ENCODE measurements at regions of chr20 and their contacts with region 1.

Region 1: DNA sequence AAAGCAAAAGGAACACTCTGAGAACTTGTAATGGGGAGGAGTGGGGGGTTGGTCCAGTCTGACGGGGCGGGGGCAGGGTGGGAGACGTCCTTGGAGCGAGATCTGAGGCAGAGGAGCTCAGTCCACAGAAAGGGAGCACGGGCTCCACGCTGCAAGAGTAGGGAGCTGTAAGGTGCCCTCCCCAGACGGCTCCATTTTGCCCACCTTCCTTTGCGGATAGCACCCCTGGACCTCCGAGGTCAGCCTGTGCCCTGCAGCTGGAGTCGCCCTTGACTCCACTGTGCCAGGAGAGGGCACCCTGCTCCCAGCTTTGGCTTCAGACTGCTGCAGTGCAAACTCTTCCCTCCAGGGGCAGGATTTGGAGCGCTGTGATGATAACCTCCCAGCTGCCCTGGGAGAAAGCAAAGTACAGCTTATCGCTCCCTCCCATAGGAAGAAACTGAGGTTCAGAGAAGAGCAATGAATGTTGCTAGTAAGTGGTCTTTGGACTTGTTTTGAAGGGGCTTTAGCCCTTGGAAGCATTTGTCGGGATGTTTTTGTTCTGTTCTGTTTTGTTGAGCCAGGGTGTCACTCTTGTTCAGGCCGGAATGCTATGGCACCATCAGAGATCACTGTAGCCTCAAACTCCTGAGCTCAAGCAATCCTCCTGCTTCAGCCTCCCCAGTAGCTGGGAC is 9.5 kb upstream of the AHCY start:
- DNase-seq: peak; percentile 95
- ATAC-seq: peak; percentile 48
- H3K4me3 ChIP-seq: peak overlapping the region; percentile 56
- H3K27ac ChIP-seq: no peak overlapping the region
- H3K4me1 ChIP-seq: peaks cover 52% of the 10 kb centered on the region
- H3K27me3 ChIP-seq: no peaks in the 10 kb centered on the region
- CTCF ChIP-seq: peak; percentile 100

Region 2: DNA sequence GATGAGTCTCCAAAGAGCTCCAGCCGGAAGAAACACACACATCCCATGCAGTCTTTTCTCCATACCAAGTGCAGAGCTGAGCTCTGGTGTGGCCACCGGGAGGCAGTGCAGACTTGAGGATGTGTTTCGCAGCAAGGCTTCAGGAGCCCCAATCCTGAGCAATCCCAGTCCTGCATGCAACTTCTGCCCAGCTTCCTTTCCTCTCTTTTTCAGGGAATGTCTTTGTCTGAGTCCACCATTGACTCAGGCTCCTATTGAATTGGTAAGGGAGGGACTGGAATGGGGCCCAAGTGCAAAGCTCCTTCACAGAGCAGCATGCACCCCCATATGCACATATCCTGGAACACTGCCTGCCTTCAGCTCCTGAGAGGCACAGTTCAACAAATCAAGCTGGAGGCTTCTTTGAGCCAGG is 122.0 kb before region 1 on chr20:
- CTCF ChIA-PET with region 1: interaction called, 11 read pairs
- POLR2A ChIA-PET with region 1: no interaction called
- intact Hi-C with region 1: no loop called
- DNase-seq: peak; percentile 84
- ATAC-seq: peak; percentile 100
- H3K4me3 ChIP-seq: no peak overlapping the region
- H3K27ac ChIP-seq: no peak overlapping the region
- H3K4me1 ChIP-seq: no peaks in the 10 kb centered on the region
- H3K27me3 ChIP-seq: peaks cover 26% of the 10 kb centered on the region
- CTCF ChIP-seq: peak; percentile 91

Region 3: GRCh38 chr20:34363062-34363464 is 50.4 kb after region 1 on chr20 and contains the start of gene ITCH:
- CTCF ChIA-PET with region 1: interaction called, 21 read pairs
- POLR2A ChIA-PET with region 1: interaction called, 22 read pairs
- intact Hi-C with region 1: loop called (anchors 1 kb)
- DNase-seq: peak; percentile 97
- ATAC-seq: peak; percentile 98
- H3K4me3 ChIP-seq: peak within 1 kb of the TSS; percentile 85
- H3K27ac ChIP-seq: peak within 1 kb of the TSS; percentile 68
- H3K4me1 ChIP-seq: peaks cover 32% of the 10 kb centered on the region
- H3K27me3 ChIP-seq: no peaks in the 10 kb centered on the region
- CTCF ChIP-seq: no peak
- total RNA-seq, gene ITCH: 49.4 and 54.8 TPM in 2 replicates

Region 4: DNA sequence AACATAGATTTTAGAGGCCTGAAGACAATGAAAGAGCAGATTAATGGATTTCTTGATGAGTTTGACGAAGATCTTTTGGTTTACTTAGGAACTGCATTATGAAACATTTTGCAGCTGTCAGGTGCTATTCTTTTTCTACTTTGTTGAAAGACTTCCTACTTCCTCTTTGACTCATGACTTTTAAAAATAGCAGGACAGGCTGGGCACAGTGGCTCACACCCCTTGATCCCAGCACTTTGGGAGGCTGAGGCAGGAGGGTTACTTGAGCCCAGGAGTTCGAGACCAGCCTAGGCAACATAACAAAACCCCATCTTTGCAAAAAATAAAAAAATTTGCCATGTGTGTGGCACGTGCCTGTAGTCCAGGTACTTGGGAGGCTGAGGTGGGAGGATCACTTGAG is 102.4 kb after region 1 on chr20:
- CTCF ChIA-PET with region 1: interaction called, 11 read pairs
- POLR2A ChIA-PET with region 1: no interaction called
- intact Hi-C with region 1: loop called (anchors 1 kb)
- DNase-seq: no peak
- ATAC-seq: no peak
- H3K4me3 ChIP-seq: no peak overlapping the region
- H3K27ac ChIP-seq: no peak overlapping the region
- H3K4me1 ChIP-seq: peaks cover 18% of the 10 kb centered on the region
- H3K27me3 ChIP-seq: no peaks in the 10 kb centered on the region
- CTCF ChIP-seq: no peak

Region 5: DNA sequence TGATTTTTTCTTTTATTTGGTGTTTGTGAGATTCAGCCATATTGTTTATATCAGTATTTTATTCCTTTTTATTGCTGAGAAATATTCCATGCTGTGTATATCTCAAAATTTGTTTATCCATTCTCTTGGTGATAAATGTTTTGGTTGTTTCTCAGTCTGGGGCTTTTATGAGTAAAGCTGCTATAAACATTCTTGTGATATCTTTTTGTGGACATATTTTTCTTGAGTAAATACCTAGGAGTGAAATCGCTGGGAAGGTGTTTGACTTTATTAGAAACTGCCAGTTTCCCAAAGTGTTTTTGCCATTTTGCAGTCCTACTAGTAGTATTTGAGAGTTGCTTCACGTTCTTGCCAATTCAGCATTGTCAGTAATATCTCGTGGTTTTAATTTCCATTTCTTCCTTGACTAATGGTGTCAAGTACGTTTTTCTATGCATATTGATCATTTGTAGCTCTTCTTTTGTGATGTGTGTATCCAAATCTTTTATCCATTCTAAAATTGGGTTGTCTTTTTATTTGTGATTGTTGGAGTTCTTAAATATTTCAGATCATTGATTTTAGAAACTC is 172.5 kb after region 1 on chr20:
- CTCF ChIA-PET with region 1: no interaction called
- POLR2A ChIA-PET with region 1: no interaction called
- intact Hi-C with region 1: no loop called
- DNase-seq: no peak
- ATAC-seq: no peak
- H3K4me3 ChIP-seq: no peak overlapping the region
- H3K27ac ChIP-seq: no peak overlapping the region
- H3K4me1 ChIP-seq: no peaks in the 10 kb centered on the region
- H3K27me3 ChIP-seq: no peaks in the 10 kb centered on the region
- CTCF ChIP-seq: no peak

Region 6: DNA sequence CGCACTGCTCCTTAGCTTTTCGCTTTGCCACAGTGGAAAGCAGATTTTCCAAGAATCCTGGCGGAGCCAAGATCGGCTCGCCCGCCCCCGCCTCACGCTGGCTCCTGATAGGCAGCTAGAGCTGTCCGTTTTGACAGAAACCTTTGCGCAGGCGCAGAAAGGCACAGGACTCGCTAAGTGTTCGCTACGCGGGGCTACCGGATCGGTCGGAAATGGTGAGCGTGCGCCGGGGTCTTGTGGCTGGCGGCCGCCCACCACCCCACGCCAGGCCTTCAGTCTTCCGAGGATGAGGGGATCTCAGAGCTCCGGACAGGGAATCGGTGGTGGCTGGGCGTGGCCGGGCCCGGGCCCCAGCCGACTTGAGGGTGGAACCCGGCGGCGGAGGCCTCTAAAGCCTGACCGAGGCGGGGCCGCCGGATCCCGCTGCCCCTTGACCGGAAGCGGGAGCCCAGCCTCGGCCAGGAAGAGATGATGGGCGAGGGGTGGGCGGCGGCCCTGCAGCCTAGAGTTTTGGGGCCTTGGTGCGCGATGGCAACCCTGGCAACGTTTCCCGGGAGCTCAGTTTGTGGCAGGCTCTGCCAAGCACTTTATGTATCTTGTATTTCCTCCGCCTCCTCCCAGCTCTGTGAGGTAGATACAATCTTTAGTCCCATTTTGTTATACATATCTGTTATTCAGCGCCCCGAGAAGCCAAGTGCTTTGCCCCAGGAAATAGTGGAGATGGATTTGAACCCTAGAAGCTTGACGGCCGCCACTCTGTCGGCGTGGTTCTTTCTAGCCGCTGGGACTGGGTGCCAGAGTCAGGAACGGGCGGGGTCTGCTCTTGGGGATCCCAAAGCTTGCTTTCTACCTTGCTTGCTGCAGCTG is 203.8 kb after region 1 on chr20 and contains the start of gene DYNLRB1:
- CTCF ChIA-PET with region 1: interaction called, 12 read pairs
- POLR2A ChIA-PET with region 1: no interaction called
- intact Hi-C with region 1: no loop called
- DNase-seq: peak; percentile 98
- ATAC-seq: peak; percentile 84
- H3K4me3 ChIP-seq: peak within 1 kb of the TSS; percentile 84
- H3K27ac ChIP-seq: peak within 1 kb of the TSS; percentile 73
- H3K4me1 ChIP-seq: peaks cover 16% of the 10 kb centered on the region
- H3K27me3 ChIP-seq: no peaks in the 10 kb centered on the region
- CTCF ChIP-seq: no peak
- total RNA-seq, gene DYNLRB1: 153 and 177 TPM in 2 replicates

Measured in PC-3 (cell line).